GM12878 (cell line): ENCODE measurements at regions of chr2 and their contacts with region 1.

Region 1: DNA sequence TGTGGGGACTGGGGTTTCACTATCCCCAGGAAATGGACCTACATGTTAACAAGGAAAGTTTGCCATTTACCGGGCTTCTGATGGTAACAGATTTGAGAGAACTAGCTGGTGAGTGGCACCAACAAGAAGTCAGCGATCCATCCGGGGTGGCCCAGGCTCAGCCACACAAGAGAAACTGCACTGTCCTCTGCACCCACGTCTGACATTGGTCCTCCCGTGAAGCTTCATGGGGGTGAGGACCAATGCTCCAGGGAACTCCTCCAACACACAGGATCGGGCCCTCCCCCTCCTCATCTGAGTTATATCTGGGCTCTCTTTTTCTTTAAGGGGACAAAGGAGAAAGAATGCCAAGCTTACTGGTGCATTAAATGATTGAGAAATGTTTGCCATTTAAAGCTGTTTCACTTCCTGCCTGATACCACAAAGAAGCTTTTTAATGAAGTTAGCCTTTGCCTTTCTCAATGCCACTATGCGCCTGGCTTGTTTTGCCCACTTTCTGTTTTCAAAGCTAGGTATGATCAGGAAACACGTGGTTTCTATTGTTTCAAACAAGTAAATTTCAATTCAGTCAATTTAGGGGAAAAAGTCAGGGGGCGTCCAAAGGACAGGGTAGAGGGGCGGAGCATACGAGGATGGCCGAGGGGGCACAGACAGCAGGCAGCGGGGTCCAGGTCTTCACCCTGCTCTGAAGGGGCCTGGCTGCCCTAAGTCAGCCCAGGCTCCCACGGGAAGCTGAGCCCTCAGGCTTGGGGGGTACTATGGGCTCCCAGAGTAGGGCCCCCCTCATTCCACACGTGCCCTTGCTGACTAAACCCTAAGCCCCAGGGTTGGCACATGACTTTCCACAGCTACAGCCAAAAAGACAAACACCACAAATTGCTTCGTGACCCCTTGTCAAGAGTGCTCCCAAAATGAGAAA is 204.0 kb upstream of the ID2 start:
- DNase-seq: peak; percentile 95
- ATAC-seq: peak; percentile 52
- H3K4me3 ChIP-seq: peak overlapping the region; percentile 43; the same call in 1 of the 2 replicates
- H3K27ac ChIP-seq: peak overlapping the region; percentile 62
- H3K4me1 ChIP-seq: peaks cover 68% of the 10 kb centered on the region
- H3K27me3 ChIP-seq: no peaks in the 10 kb centered on the region
- CTCF ChIP-seq: no peak
- EP300 ChIP-seq: peak; percentile 94 to 96
- POLR2A ChIP-seq: no peak
- RAD21 ChIP-seq: no peak

Region 2: DNA sequence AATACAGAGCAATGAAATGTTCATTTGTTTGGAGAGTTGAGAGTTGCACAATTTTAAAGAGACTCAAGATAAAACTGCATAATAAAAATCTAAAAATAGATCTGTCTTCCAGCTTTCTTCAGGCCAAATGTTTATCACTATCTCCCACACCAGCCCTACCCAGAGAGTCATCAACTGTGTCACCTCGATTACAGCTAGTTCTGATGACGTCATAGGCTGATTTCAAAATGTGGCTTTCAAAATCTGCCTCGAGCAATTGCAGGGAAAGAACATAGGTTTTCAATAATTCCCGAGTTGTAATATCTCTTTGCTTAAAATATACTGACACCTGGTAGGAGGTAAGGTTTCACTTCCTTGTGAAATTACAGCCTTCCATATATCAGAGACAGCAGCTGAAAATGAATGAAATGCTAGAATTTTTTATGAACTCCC is 473.5 kb before region 1 on chr2:
- CTCF ChIA-PET with region 1: no interaction called
- POLR2A ChIA-PET with region 1: no interaction called
- RAD21 ChIA-PET with region 1: no interaction called
- SMC1A ChIA-PET with region 1: interaction called, 6 read pairs
- in situ Hi-C with region 1: no loop called
- intact Hi-C with region 1: loop called (anchors 2 kb)
- DNase-seq: no peak
- ATAC-seq: peak; percentile 46
- H3K4me3 ChIP-seq: no peak overlapping the region
- H3K27ac ChIP-seq: no peak overlapping the region
- H3K4me1 ChIP-seq: peaks cover 4% of the 10 kb centered on the region; the same call in 1 of the 2 replicates
- H3K27me3 ChIP-seq: no peaks in the 10 kb centered on the region
- CTCF ChIP-seq: no peak
- EP300 ChIP-seq: peak; percentile 69 to 79; a peak in 2 of 4 replicates
- POLR2A ChIP-seq: no peak
- RAD21 ChIP-seq: no peak

Region 3: DNA sequence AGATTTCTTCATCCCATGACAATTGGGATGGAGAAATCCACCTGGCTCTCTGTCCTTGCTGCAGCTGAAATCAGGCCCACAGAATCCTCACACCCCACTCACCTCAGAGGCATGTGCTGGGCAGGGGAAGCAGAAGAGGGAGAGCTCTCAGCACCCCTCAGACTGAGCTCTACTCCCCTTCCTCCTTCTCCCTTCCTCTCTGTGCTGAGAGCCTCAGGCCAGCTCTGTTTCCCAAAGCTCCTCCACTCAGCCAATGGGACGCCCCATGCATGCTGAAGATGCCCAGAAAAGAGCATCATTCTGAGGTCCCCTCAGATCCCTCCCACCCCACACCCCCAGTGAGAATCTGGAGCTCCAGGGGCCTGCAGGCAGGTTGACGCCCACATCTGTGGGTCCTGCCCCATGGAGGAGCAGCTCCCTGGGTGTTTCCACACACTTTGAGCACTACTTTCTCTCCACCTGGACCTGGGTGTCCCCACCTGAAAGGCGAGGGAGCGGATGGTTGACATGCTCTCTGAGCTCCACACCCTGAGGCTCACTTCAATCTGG is 433.7 kb before region 1 on chr2:
- CTCF ChIA-PET with region 1: no interaction called
- POLR2A ChIA-PET with region 1: no interaction called
- RAD21 ChIA-PET with region 1: no interaction called
- SMC1A ChIA-PET with region 1: no interaction called
- in situ Hi-C with region 1: no loop called
- intact Hi-C with region 1: no loop called
- DNase-seq: no peak
- ATAC-seq: no peak
- H3K4me3 ChIP-seq: no peak overlapping the region
- H3K27ac ChIP-seq: no peak overlapping the region
- H3K4me1 ChIP-seq: peaks cover 4% of the 10 kb centered on the region
- H3K27me3 ChIP-seq: no peaks in the 10 kb centered on the region
- CTCF ChIP-seq: no peak
- EP300 ChIP-seq: no peak
- POLR2A ChIP-seq: no peak
- RAD21 ChIP-seq: no peak

Region 4: GRCh38 chr2:8421658-8422449 is 56.0 kb before region 1 on chr2:
- CTCF ChIA-PET with region 1: interaction called, 16 read pairs
- POLR2A ChIA-PET with region 1: interaction called, 28 read pairs
- RAD21 ChIA-PET with region 1: interaction called, 40 read pairs
- SMC1A ChIA-PET with region 1: interaction called, 145 read pairs
- in situ Hi-C with region 1: no loop called
- intact Hi-C with region 1: no loop called
- DNase-seq: peak; percentile 71
- ATAC-seq: peak; percentile 85
- H3K4me3 ChIP-seq: no peak overlapping the region
- H3K27ac ChIP-seq: peak overlapping the region; percentile 46
- H3K4me1 ChIP-seq: peaks cover 16% of the 10 kb centered on the region
- H3K27me3 ChIP-seq: no peaks in the 10 kb centered on the region
- CTCF ChIP-seq: peak; percentile 26 to 44 (median 29); a peak in 5 of 6 replicates
- EP300 ChIP-seq: peak; percentile 56 to 80; a peak in 3 of 4 replicates
- POLR2A ChIP-seq: no peak
- RAD21 ChIP-seq: peak; percentile 49

Region 5: GRCh38 chr2:8488001-8488738 is 10.4 kb after region 1 on chr2:
- CTCF ChIA-PET with region 1: interaction called, 10 read pairs
- POLR2A ChIA-PET with region 1: interaction called, 40 read pairs
- RAD21 ChIA-PET with region 1: interaction called, 36 read pairs
- SMC1A ChIA-PET with region 1: interaction called, 22 read pairs
- in situ Hi-C with region 1: no loop called
- intact Hi-C with region 1: no loop called
- DNase-seq: peak; percentile 95
- ATAC-seq: peak; percentile 63
- H3K4me3 ChIP-seq: peak overlapping the region; percentile 75
- H3K27ac ChIP-seq: peak overlapping the region; percentile 80
- H3K4me1 ChIP-seq: peaks cover 19% of the 10 kb centered on the region
- H3K27me3 ChIP-seq: no peaks in the 10 kb centered on the region
- CTCF ChIP-seq: no peak
- EP300 ChIP-seq: peak; percentile 78 to 80; a peak in 3 of 4 replicates
- POLR2A ChIP-seq: no peak
- RAD21 ChIP-seq: peak; percentile 1; the same call in 1 of the 2 replicates

Region 6: DNA sequence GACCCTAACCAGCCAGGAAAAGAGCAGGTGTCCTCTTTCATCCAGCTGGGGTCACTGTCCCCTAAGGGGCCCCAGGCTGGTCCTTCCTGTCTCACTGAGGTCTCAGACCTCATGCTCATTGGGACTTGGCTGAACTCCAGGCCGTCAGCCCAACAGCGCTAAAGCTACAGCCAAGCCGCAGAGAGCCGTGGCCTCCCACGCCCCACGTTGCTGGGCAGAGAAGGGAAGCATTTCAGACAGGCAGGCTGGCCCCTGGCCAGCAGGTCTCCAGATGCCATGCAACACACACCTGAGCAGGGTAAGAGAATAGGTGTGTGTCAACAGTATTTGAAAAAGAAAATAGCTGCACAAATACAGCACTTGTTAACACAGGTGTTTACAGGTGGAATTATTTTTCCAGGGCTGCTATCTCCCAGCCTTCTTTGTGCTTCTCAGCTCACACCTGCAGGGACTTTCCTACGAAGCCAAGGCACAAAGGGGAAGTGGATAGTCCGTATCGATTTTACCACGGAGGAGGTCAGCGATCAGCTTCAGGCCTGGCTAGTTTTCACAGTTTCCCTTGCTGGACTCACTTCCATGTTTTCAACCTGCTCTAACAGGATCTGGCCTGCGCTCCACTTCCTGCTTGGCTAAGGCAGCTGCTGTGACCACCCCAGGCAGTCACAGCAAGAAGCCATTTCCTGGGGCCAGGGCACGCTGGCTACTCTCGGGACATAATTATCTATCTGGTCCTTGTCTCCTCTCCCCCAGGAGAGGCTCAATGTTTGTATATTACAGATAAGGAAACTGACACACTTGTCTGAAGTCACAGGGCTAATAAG is 48.0 kb after region 1 on chr2:
- CTCF ChIA-PET with region 1: interaction called, 17 read pairs
- POLR2A ChIA-PET with region 1: interaction called, 73 read pairs
- RAD21 ChIA-PET with region 1: interaction called, 155 read pairs
- SMC1A ChIA-PET with region 1: interaction called, 121 read pairs
- in situ Hi-C with region 1: no loop called
- intact Hi-C with region 1: no loop called
- DNase-seq: peak; percentile 90
- ATAC-seq: peak; percentile 82
- H3K4me3 ChIP-seq: 0 out of 2 replicates have a peak overlapping the region, but pooled peaks have one; percentile 9
- H3K27ac ChIP-seq: peak overlapping the region; percentile 74
- H3K4me1 ChIP-seq: peaks cover 64% of the 10 kb centered on the region
- H3K27me3 ChIP-seq: no peaks in the 10 kb centered on the region
- CTCF ChIP-seq: peak; percentile 54 to 72 (median 58)
- EP300 ChIP-seq: peak in 1 of 2 experiments; percentile 80; a peak in 3 of 4 replicates
- POLR2A ChIP-seq: no peak
- RAD21 ChIP-seq: peak; percentile 88

Region 7: DNA sequence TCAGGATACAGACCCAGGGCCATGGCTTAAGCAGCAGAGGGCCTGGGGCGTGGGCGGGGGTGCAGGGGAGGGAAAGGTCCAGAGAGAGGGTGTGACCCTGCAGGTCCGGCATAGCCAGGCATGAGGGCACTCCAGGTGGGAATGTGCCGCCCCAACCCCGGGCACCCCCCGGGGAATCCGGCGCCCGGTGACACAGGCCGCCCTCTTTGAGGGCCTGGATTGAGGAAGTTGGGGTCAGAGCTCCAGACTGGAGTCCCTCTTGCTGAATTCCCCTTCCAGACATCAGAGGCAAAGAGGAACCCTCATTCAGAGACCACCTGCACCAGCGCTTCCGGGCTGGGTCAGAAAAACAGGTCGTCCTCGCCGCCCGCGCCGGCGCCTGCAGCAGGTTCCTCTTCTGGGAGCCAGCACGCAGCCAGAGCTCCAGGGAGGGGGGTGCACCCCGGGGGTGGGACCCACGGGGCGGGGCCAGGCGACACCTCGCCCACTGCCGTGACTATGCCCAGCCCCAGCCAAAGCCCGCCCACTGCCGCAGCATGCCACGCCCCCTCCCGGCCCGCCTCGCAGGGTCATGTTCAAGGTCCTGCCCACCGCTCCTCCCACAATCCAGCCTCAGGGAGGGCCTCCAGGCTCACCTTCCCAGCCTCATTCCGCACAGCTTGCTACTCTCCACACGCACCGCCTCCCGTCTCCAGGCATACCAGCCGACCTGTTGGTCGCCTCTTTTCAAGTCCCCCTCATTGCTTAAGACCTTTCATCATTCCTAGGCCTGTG is 105.8 kb after region 1 on chr2:
- CTCF ChIA-PET with region 1: no interaction called
- POLR2A ChIA-PET with region 1: no interaction called
- RAD21 ChIA-PET with region 1: interaction called, 4 read pairs
- SMC1A ChIA-PET with region 1: interaction called, 3 read pairs
- in situ Hi-C with region 1: no loop called
- intact Hi-C with region 1: loop called (anchors 2 kb)
- DNase-seq: peak; percentile 80
- ATAC-seq: peak; percentile 95
- H3K4me3 ChIP-seq: peak overlapping the region; percentile 30; the same call in 1 of the 2 replicates
- H3K27ac ChIP-seq: peak overlapping the region; percentile 51; the same call in 1 of the 2 replicates
- H3K4me1 ChIP-seq: peaks cover 27% of the 10 kb centered on the region
- H3K27me3 ChIP-seq: no peaks in the 10 kb centered on the region
- CTCF ChIP-seq: no peak
- EP300 ChIP-seq: no peak
- POLR2A ChIP-seq: peak; percentile 52; the same call in 1 of the 2 replicates
- RAD21 ChIP-seq: no peak